ENCODE measurements at regions of chrX and their contacts with region 1.

Region 1: GRCh38 chrX:130173190-130173895 is 1.6 kb downstream of the RAB33A start:
- DNase-seq: peak; percentile 22
- H3K4me3 Mint-ChIP-seq: peak overlapping the region; percentile 92
- H3K27ac Mint-ChIP-seq: peak overlapping the region; percentile 90
- H3K4me1 Mint-ChIP-seq: peaks cover 43% of the 10 kb centered on the region
- H3K27me3 Mint-ChIP-seq: no peaks in the 10 kb centered on the region

Region 2: GRCh38 chrX:129091097-129091496 is 1082.2 kb before region 1 on chrX:
- intact Hi-C with region 1: no loop called
- DNase-seq: no peak
- H3K4me3 Mint-ChIP-seq: no peak overlapping the region
- H3K27ac Mint-ChIP-seq: no peak overlapping the region
- H3K4me1 Mint-ChIP-seq: no peaks in the 10 kb centered on the region
- H3K27me3 Mint-ChIP-seq: no peaks in the 10 kb centered on the region

Region 3: DNA sequence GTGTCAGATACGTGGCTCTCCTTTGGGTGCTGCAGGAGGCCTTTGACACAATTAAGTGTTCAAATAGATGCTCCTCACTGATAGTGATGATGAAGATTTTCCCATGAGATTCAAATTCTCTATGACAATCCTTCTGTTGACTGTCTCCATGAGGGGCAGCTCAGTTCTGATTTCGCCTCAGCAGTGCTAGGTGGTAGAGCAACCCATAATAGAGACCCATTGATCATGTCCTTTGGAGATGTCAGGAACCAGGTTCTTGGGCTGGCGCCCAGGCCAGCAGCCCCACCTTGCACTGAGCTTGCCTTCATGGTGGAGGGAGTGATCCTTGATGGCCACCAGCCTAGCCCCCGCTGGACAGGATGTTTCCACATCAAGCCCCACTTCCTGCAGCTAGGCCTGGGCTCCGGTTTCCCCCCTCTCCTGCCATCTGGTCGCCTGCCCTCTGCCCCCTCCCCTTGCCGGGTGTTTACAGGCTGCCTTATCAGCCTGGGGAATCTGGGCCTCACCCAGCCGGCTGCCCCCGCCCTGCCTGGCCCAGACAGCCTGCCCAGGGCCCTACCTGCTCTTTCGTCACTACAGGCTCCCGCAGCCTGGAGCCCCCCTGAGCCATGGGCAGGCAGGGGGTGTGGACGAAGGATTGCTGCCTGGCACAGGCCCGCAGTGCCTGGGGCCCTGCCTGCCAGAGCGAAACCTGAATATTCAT is 75.7 kb before region 1 on chrX:
- intact Hi-C with region 1: no loop called
- DNase-seq: no peak
- H3K4me3 Mint-ChIP-seq: no peak overlapping the region
- H3K27ac Mint-ChIP-seq: peak overlapping the region; percentile 85
- H3K4me1 Mint-ChIP-seq: peaks cover 33% of the 10 kb centered on the region
- H3K27me3 Mint-ChIP-seq: no peaks in the 10 kb centered on the region

Region 4: GRCh38 chrX:130211415-130212186 is 38.3 kb after region 1 on chrX:
- intact Hi-C with region 1: loop called (anchors 2 kb)
- DNase-seq: no peak
- H3K4me3 Mint-ChIP-seq: peak overlapping the region; percentile 62
- H3K27ac Mint-ChIP-seq: peak overlapping the region; percentile 90
- H3K4me1 Mint-ChIP-seq: peaks cover 26% of the 10 kb centered on the region
- H3K27me3 Mint-ChIP-seq: no peaks in the 10 kb centered on the region

Measured in activated T-helper 2 cell treated with anti-CD3 and anti-CD28 coated beads, Interferon-gamma antibody, Interleukin-2, Interleukin-4, amounts not matched to agents 10 μg/mL and 5 μg/mL and 100 μg/mL, durations not matched to agents 14 hours and 24 hours and 36 hours (primary cell).